ENCODE measurements at regions of chr7 and their contacts with region 1.

Region 1: GRCh38 chr7:90552521-90552920 is 43.6 kb upstream of the CDK14 start:
- DNase-seq: no peak
- ATAC-seq: no peak
- H3K4me3 ChIP-seq: no peak overlapping the region
- H3K27ac ChIP-seq: no peak overlapping the region
- H3K4me1 ChIP-seq: no peaks in the 10 kb centered on the region
- H3K27me3 ChIP-seq: no peaks in the 10 kb centered on the region

Region 2: GRCh38 chr7:89826557-89826956 is 726.0 kb before region 1 on chr7:
- intact Hi-C with region 1: no loop called
- DNase-seq: no peak
- ATAC-seq: no peak
- H3K4me3 ChIP-seq: no peak overlapping the region
- H3K27ac ChIP-seq: no peak overlapping the region
- H3K4me1 ChIP-seq: no peaks in the 10 kb centered on the region
- H3K27me3 ChIP-seq: no peaks in the 10 kb centered on the region

Region 3: DNA sequence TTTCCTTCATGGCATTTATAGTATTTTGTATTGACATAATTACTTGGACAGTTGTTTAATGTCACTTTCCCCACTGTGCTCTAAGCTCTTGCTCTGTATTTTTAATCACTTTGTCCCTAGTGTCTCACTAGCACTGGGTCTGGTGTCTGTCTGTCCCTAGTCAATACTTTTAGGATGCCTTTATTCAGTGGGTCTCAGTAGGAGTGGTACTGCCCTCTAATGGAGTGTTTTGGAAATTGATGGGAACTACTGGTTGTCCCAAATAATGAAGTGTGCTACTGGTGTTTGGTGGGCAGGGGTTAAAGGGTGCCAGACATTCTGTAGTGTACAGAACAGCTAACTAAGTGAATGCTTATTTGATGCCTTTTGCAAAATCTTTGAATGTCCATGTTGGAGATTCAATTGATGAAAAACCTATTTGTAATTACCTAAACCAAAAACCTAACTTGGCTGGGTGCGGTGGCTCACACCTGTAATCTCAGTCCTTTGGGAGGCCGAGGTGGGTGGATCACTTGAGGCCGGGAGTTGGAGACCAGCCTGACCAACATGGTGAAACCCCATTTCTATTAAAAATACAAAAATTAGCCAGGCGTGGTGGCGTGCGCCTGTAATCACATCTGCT is 76.9 kb after region 1 on chr7:
- intact Hi-C with region 1: loop called in 3 of 4 experiments (anchors 5 to 10 kb)
- DNase-seq: no peak
- ATAC-seq: peak; percentile 73 to 79
- H3K4me3 ChIP-seq: no peak overlapping the region
- H3K27ac ChIP-seq: no peak overlapping the region
- H3K4me1 ChIP-seq: peaks cover 4% of the 10 kb centered on the region
- H3K27me3 ChIP-seq: no peaks in the 10 kb centered on the region

Region 4: DNA sequence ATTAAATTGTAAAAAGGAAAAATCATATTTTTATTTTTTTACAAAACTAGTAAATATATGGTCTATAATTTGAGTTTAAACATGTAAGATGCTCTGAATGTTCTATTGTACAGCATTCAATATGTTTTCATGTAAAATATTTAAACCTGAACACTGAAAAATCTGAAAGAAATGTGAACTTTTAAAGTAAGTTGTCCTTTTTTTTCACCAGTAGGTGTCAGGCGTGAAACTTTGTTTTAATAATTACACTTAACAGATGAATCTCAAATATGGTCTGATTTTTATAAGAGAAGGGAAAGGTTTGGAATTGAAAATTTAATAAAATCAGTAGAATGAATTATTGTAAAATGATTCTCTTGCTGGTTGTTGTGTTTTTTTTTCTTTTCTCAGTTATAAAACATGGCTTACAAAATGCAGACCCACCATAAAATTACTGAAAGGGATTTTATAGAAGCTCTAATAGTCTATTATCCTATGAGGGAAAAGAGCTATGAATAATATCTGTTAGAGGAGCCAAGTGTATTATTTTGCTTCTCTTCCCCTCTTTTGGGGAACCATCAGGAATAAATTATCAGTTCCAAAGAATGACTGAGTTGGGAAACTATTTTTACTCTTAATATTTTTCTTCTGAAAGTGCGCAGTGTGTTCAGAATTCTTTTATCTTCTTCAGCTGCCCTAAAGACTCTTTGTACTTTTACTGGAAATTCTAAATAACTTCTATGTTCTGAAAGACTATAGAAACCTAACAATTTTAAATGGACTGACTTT is 494.0 kb after region 1 on chr7:
- intact Hi-C with region 1: no loop called
- DNase-seq: no peak
- ATAC-seq: no peak
- H3K4me3 ChIP-seq: no peak overlapping the region
- H3K27ac ChIP-seq: no peak overlapping the region
- H3K4me1 ChIP-seq: peaks cover 2% of the 10 kb centered on the region
- H3K27me3 ChIP-seq: no peaks in the 10 kb centered on the region

Measured in right cardiac atrium (tissue), 5 donors.